CD8-positive, alpha-beta memory T cell (primary cell): ENCODE measurements at regions of chr21 and their contacts with region 1.

Region 1: GRCh38 chr21:32392880-32393676 is at the start of gene URB1:
- DNase-seq: peak; percentile 92 to 96 (median 93)
- H3K4me3 ChIP-seq: peak within 1 kb of the TSS; percentile 86
- H3K4me3 Mint-ChIP-seq: peak within 1 kb of the TSS; percentile 86 to 93 (median 87)
- H3K27ac ChIP-seq: peak within 1 kb of the TSS; percentile 83
- H3K27ac Mint-ChIP-seq: peak within 1 kb of the TSS; percentile 70 to 94 (median 80)
- H3K4me1 ChIP-seq: peaks cover 26% of the 10 kb centered on the region
- H3K4me1 Mint-ChIP-seq: peaks cover 37 to 53% (median 48%) of the 10 kb centered on the region in 3 donors
- H3K27me3 ChIP-seq: no peaks in the 10 kb centered on the region
- H3K27me3 Mint-ChIP-seq: peaks cover 3 to 12% of the 10 kb centered on the region in 2 donors
- total RNA-seq, gene URB1: 38.9 to 39.8 TPM

Region 2: GRCh38 chr21:32412162-32413014 is 19.3 kb after region 1 on chr21 and contains the start of gene EVA1C:
- CTCF ChIA-PET with region 1: interaction called, 6 read pairs
- POLR2A ChIA-PET with region 1: interaction called, 11 read pairs
- DNase-seq: peak; percentile 68 to 86 (median 80)
- H3K4me3 ChIP-seq: peak within 1 kb of the TSS; percentile 88
- H3K4me3 Mint-ChIP-seq: peak within 1 kb of the TSS; percentile 93 to 97 (median 96)
- H3K27ac ChIP-seq: peak within 1 kb of the TSS; percentile 90
- H3K27ac Mint-ChIP-seq: peak within 1 kb of the TSS; percentile 90 to 99 (median 96)
- H3K4me1 ChIP-seq: peaks cover 34% of the 10 kb centered on the region
- H3K4me1 Mint-ChIP-seq: peaks cover 54 to 86% (median 63%) of the 10 kb centered on the region in 3 donors
- H3K27me3 ChIP-seq: no peaks in the 10 kb centered on the region
- H3K27me3 Mint-ChIP-seq: no peaks in the 10 kb centered on the region
- total RNA-seq, gene EVA1C: 13.4 to 16.2 TPM